Panc1 (cell line): ENCODE measurements at regions of chr19 and their contacts with region 1.

Region 1: DNA sequence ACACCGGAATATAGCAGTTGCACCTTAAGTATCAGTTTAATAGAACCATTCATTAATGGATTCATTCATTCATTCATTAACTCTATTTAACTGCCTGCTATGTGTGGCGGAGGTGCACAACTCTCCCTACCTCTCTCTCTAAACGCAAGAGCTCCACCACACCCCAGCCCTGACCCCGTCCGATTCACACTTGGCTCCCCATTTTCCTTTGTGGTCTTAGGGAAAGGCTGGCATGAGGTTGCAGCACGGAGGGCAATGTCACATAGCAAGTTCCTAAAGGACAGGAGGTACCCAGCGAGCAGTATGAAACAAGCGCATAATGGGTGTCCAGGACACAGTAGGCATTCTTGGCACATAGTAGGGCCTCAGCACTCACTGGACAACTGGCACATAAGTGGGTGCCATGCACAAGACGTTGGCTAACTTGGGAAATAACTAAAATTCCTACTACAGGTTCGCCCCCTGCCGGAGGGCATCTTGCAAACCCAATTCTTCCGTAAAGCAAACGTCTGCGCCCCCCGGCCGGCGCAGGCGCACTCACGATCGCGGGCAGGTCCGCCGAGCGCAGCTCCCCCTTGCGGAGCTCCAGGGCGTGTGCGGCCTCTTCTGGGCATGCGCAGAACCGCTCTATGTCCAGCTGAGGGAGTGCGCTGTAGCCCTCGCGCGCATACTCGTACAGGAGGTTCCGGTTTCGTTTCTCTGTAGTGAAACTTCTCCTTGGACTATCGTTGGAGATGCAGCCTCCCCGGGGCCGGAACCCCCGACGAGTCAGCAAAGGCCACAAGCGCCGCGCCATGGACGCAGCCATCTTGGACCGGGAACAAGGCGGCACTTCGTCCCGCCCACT is at the start of gene SARS2:
- DNase-seq: peak; percentile 100
- ATAC-seq: peak; percentile 76
- H3K4me3 ChIP-seq: peak within 1 kb of the TSS; percentile 54 to 87
- H3K27ac ChIP-seq: peak within 1 kb of the TSS; percentile 97
- H3K4me1 ChIP-seq: peaks cover 11% of the 10 kb centered on the region
- H3K27me3 ChIP-seq: no peaks in the 10 kb centered on the region
- CTCF ChIP-seq: no peak
- total RNA-seq, gene SARS2: 186 TPM

Region 2: DNA sequence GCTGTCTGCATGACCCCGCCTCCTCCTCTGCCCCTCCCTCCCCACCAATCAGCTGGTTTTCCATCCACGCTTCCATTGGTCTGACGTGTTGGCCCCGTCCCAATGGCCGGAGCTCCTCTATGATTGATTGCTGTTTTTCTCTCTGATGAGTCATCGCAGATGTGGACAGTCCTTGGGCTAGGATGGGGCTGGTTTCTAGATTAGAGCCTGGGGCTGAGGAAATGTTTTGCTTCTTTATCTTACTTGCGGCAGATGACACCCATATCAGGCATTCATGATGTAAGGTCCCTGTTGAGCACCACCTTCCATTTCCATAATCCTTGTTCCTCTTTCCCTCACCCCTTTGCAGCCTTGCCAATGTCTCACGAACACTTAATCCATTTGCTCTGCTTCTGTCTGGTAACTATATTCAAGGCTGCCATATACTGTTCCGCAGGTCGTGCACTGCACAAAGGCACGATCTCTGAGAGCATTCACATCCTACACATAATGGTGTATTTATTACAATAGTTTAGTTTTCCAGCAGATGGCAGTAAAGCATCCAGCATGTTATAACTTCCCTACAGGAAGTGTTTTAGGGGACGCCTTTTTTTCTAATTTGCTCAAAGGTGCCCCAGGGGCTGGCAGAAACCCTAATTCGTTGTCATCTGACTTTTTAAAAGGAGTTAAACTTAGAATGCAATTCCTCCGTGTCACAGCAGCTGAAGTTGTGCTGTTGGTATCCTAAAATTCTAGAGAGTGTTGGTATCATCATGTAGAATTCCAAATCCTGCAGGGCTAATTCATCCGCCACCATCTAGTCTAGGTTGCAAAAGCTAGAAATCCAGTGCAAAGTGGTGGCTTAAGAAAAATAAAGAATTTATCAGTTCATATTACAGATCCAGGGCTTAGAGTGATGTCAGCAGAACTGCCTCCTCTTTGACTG is 385.9 kb before region 1 on chr19:
- CTCF ChIA-PET with region 1: interaction called, 4 read pairs
- POLR2A ChIA-PET with region 1: no interaction called
- in situ Hi-C with region 1: no loop called
- intact Hi-C with region 1: loop called (anchors 10 kb)
- DNase-seq: peak; percentile 95
- ATAC-seq: peak; percentile 93
- H3K4me3 ChIP-seq: peak overlapping the region; percentile 25 to 50
- H3K27ac ChIP-seq: peak overlapping the region; percentile 32
- H3K4me1 ChIP-seq: peaks cover 15% of the 10 kb centered on the region
- H3K27me3 ChIP-seq: peaks cover 3% of the 10 kb centered on the region; the same call in 1 of the 2 replicates
- CTCF ChIP-seq: no peak

Region 3: GRCh38 chr19:38683393-38684080 is 246.6 kb before region 1 on chr19:
- CTCF ChIA-PET with region 1: no interaction called
- POLR2A ChIA-PET with region 1: interaction called, 13 read pairs
- in situ Hi-C with region 1: no loop called
- intact Hi-C with region 1: no loop called
- DNase-seq: peak; percentile 100
- ATAC-seq: peak; percentile 87
- H3K4me3 ChIP-seq: peak overlapping the region in 1 of 2 experiments; percentile 10; a peak in 2 of 4 replicates
- H3K27ac ChIP-seq: peak overlapping the region; percentile 98
- H3K4me1 ChIP-seq: peaks cover 100% of the 10 kb centered on the region
- H3K27me3 ChIP-seq: no peaks in the 10 kb centered on the region
- CTCF ChIP-seq: no peak

Region 4: GRCh38 chr19:38849860-38850435 is 80.2 kb before region 1 on chr19 and contains the start of gene HNRNPL:
- CTCF ChIA-PET with region 1: interaction called, 7 read pairs
- POLR2A ChIA-PET with region 1: interaction called, 7 read pairs
- in situ Hi-C with region 1: loop called (anchors 10 kb)
- intact Hi-C with region 1: loop called (anchors 1 kb)
- DNase-seq: peak; percentile 100
- ATAC-seq: peak; percentile 75
- H3K4me3 ChIP-seq: peak within 1 kb of the TSS; percentile 61 to 70
- H3K27ac ChIP-seq: peak within 1 kb of the TSS; percentile 99
- H3K4me1 ChIP-seq: peaks cover 52% of the 10 kb centered on the region
- H3K27me3 ChIP-seq: no peaks in the 10 kb centered on the region
- CTCF ChIP-seq: no peak
- total RNA-seq, gene HNRNPL: 749 TPM

Region 5: GRCh38 chr19:38904581-38905539 is 25.3 kb before region 1 on chr19:
- CTCF ChIA-PET with region 1: interaction called, 19 read pairs
- POLR2A ChIA-PET with region 1: interaction called, 10 read pairs
- in situ Hi-C with region 1: no loop called
- intact Hi-C with region 1: no loop called
- DNase-seq: no peak
- ATAC-seq: no peak
- H3K4me3 ChIP-seq: no peak overlapping the region
- H3K27ac ChIP-seq: no peak overlapping the region
- H3K4me1 ChIP-seq: peaks cover 14% of the 10 kb centered on the region
- H3K27me3 ChIP-seq: no peaks in the 10 kb centered on the region
- CTCF ChIP-seq: no peak

Region 6: DNA sequence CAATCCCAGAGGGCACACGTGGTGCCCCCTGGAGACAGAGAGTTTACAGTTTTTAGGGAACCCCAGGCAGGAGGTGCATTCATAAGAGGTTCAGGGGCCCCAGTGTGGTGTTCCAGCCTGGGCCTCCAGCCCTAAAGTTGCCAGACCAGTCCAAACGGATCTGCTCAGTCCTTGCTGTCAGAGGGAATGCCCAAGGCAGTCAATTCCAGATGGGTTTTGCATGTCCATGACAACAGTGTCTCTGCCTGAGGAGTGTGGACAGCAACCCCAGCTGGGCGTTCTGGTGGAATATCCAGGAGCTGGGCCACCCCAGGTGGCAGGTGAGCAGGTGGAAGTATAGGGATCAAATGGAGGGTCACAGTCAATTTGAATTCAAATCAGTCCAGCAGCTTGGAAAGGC is 76.9 kb after region 1 on chr19:
- CTCF ChIA-PET with region 1: no interaction called
- POLR2A ChIA-PET with region 1: no interaction called
- in situ Hi-C with region 1: no loop called
- intact Hi-C with region 1: no loop called
- DNase-seq: no peak
- ATAC-seq: peak; percentile 41; the same call in 1 of the 2 replicates
- H3K4me3 ChIP-seq: no peak overlapping the region
- H3K27ac ChIP-seq: no peak overlapping the region
- H3K4me1 ChIP-seq: no peaks in the 10 kb centered on the region
- H3K27me3 ChIP-seq: no peaks in the 10 kb centered on the region
- CTCF ChIP-seq: no peak

Region 7: GRCh38 chr19:40119380-40119779 is 1189.2 kb after region 1 on chr19:
- CTCF ChIA-PET with region 1: no interaction called
- POLR2A ChIA-PET with region 1: interaction called, 12 read pairs
- in situ Hi-C with region 1: no loop called
- intact Hi-C with region 1: no loop called
- DNase-seq: no peak
- ATAC-seq: no peak
- H3K4me3 ChIP-seq: no peak overlapping the region
- H3K27ac ChIP-seq: no peak overlapping the region
- H3K4me1 ChIP-seq: no peaks in the 10 kb centered on the region
- H3K27me3 ChIP-seq: peaks cover 46% of the 10 kb centered on the region
- CTCF ChIP-seq: no peak